ENCODE measurements at regions of chr5 and their contacts with region 1.

Region 1: GRCh38 chr5:151771259-151772028 is at the start of gene G3BP1:
- DNase-seq: peak; percentile 99
- H3K4me3 Mint-ChIP-seq: peak within 1 kb of the TSS; percentile 93
- H3K27ac Mint-ChIP-seq: peak within 1 kb of the TSS; percentile 76
- H3K4me1 Mint-ChIP-seq: peaks cover 31% of the 10 kb centered on the region
- H3K27me3 Mint-ChIP-seq: no peaks in the 10 kb centered on the region
- total RNA-seq, gene G3BP1: 296 and 312 TPM in 2 replicates

Region 2: DNA sequence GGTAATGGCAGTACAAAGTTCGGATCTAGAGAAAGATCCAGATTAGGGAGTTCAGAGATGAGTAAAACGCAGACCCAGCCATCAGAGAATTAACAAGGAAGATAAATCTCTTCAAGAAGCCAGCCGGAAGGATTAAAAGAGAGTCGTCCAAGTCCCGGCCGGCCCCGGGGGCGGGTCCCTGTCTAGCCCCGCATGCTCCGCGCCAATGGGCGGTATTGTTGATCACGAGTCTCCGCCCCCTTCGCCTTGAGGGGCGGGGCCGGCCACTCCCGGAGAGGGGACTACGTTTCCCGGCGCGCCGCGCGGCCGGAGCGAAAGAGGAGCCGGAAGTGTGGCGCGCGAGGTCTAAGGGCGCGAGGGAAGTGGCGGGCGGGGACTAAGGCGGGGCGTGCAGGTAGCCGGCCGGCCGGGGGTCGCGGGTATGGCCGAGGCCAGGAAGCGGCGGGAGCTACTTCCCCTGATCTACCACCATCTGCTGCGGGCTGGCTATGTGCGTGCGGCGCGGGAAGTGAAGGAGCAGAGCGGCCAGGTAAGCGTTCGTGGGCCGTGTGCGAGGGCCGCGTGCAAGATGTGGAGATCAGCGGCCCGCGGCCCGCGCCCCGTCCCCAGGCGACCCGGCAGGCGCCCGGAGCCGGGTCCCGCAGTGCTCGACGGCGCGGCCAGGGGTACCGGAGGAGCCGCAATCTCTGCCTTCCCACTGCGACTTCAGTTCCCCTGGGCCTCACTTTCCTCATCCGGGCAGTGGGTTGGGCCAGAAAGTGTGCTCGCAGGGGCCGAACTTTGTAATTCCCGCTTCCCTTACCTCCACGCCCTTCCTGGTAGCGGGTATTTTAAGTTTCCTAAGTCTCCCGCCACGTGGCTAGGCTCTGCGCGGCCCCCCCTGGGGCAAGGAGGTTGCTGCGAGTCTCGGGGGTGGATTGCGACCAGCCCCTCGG is 1413.9 kb before region 1 on chr5 and contains the start of gene TCOF1:
- intact Hi-C with region 1: loop called (anchors 10 kb)
- DNase-seq: peak; percentile 96
- H3K4me3 Mint-ChIP-seq: peak within 1 kb of the TSS; percentile 87
- H3K27ac Mint-ChIP-seq: peak within 1 kb of the TSS; percentile 85
- H3K4me1 Mint-ChIP-seq: peaks cover 32% of the 10 kb centered on the region
- H3K27me3 Mint-ChIP-seq: peaks cover 4% of the 10 kb centered on the region
- total RNA-seq, gene TCOF1: 95.8 and 98.2 TPM in 2 replicates

Region 3: GRCh38 chr5:151080623-151081430 is 690.6 kb before region 1 on chr5 and contains the start of gene TNIP1:
- intact Hi-C with region 1: loop called (anchors 10 kb)
- DNase-seq: peak; percentile 93
- H3K4me3 Mint-ChIP-seq: peak within 1 kb of the TSS; percentile 99
- H3K27ac Mint-ChIP-seq: peak within 1 kb of the TSS; percentile 87
- H3K4me1 Mint-ChIP-seq: peaks cover 76% of the 10 kb centered on the region
- H3K27me3 Mint-ChIP-seq: no peaks in the 10 kb centered on the region
- total RNA-seq, gene TNIP1: 473 and 477 TPM in 2 replicates

Region 4: GRCh38 chr5:151252762-151253604 is 518.5 kb before region 1 on chr5 and contains the start of gene GM2A:
- intact Hi-C with region 1: loop called (anchors 2 kb)
- DNase-seq: peak; percentile 99
- H3K4me3 Mint-ChIP-seq: peak within 1 kb of the TSS; percentile 85
- H3K27ac Mint-ChIP-seq: peak within 1 kb of the TSS; percentile 84
- H3K4me1 Mint-ChIP-seq: peaks cover 45% of the 10 kb centered on the region
- H3K27me3 Mint-ChIP-seq: no peaks in the 10 kb centered on the region
- total RNA-seq, gene GM2A: 20.4 and 20.9 TPM in 2 replicates

Region 5: GRCh38 chr5:151659001-151659754 is 112.3 kb before region 1 on chr5:
- intact Hi-C with region 1: loop called (anchors 1 kb)
- DNase-seq: peak; percentile 60
- H3K4me3 Mint-ChIP-seq: no peak overlapping the region
- H3K27ac Mint-ChIP-seq: no peak overlapping the region
- H3K4me1 Mint-ChIP-seq: peaks cover 10% of the 10 kb centered on the region
- H3K27me3 Mint-ChIP-seq: peaks cover 18% of the 10 kb centered on the region

Region 6: GRCh38 chr5:151758430-151759241 is 12.8 kb before region 1 on chr5 and contains the start of gene ATOX1:
- intact Hi-C with region 1: loop called (anchors 1 kb)
- DNase-seq: peak; percentile 87
- H3K4me3 Mint-ChIP-seq: peak within 1 kb of the TSS; percentile 92
- H3K27ac Mint-ChIP-seq: peak within 1 kb of the TSS; percentile 85
- H3K4me1 Mint-ChIP-seq: peaks cover 32% of the 10 kb centered on the region
- H3K27me3 Mint-ChIP-seq: peaks cover 4% of the 10 kb centered on the region
- total RNA-seq, gene ATOX1: 69.8 and 82.8 TPM in 2 replicates

Region 7: GRCh38 chr5:151949909-151950308 is 178.5 kb after region 1 on chr5:
- intact Hi-C with region 1: no loop called
- DNase-seq: no peak
- H3K4me3 Mint-ChIP-seq: no peak overlapping the region
- H3K27ac Mint-ChIP-seq: no peak overlapping the region
- H3K4me1 Mint-ChIP-seq: no peaks in the 10 kb centered on the region
- H3K27me3 Mint-ChIP-seq: no peaks in the 10 kb centered on the region